ENCODE measurements at regions of chr2 and their contacts with region 1.

Region 1: GRCh38 chr2:221203125-221203524 is 369.0 kb downstream of the EPHA4 start:
- DNase-seq: peak; percentile 94
- H3K4me3 ChIP-seq: peak overlapping the region; percentile 53
- H3K27ac ChIP-seq: peak overlapping the region; percentile 88
- H3K4me1 ChIP-seq: peaks cover 60% of the 10 kb centered on the region
- CTCF ChIP-seq: no peak

Region 2: DNA sequence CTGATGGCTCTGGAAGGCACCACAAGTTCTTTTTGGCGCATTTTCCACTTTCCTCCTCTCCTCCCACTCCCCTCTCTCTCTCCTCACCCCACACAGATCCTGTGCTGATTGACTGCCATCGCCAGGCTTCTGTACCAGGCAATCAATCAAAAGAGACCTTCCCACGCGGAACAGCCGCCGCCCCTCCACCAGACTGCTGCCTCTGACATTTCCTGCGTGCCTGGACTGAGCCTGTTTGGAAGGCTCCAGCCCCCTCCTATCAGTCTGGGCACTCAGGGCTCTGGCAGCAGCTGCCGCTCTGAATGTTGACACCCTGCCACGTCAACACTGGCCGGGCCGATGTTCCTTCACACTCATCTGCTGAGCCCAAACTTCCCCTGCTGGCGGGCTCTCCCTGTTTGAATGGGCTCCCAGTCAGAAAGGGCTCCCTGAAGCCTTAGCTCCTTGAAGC is 98.7 kb before region 1 on chr2:
- CTCF ChIA-PET with region 1: no interaction called
- POLR2A ChIA-PET with region 1: no interaction called
- intact Hi-C with region 1: no loop called
- DNase-seq: no peak
- H3K4me3 ChIP-seq: no peak overlapping the region
- H3K27ac ChIP-seq: no peak overlapping the region
- H3K4me1 ChIP-seq: no peaks in the 10 kb centered on the region
- CTCF ChIP-seq: no peak

Region 3: DNA sequence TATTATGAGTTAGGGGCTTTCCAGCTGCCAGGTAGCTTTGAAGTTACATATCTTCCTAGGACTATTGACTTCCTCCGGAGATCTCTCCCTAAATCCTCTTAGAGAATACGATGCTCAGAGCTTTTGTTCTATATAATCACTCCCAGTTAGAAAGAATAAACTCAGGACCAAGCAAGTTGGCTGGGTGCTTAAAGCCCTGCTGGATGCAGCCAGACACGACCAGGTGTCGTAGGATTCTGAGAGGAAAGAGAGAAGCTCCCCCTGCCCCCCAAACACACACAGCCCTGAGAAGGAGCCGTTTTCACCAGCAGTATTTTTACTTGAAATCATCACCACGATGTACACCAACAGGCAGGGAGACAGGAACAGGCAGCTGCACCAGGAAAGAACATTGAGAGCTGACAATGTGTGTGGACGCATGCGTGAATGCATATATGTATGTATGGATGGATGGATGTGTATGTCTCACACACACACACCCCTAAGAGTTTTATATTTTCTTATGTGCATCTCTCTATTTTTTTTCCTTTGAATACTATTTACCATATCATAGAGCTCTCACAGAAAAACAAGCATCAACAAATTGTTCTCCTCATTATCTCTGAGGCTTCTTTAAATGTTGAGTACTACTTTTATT is 13.6 kb before region 1 on chr2:
- CTCF ChIA-PET with region 1: no interaction called
- POLR2A ChIA-PET with region 1: interaction called, 19 read pairs
- intact Hi-C with region 1: no loop called
- DNase-seq: no peak
- H3K4me3 ChIP-seq: no peak overlapping the region
- H3K27ac ChIP-seq: no peak overlapping the region
- H3K4me1 ChIP-seq: peaks cover 28% of the 10 kb centered on the region
- CTCF ChIP-seq: no peak

Region 4: DNA sequence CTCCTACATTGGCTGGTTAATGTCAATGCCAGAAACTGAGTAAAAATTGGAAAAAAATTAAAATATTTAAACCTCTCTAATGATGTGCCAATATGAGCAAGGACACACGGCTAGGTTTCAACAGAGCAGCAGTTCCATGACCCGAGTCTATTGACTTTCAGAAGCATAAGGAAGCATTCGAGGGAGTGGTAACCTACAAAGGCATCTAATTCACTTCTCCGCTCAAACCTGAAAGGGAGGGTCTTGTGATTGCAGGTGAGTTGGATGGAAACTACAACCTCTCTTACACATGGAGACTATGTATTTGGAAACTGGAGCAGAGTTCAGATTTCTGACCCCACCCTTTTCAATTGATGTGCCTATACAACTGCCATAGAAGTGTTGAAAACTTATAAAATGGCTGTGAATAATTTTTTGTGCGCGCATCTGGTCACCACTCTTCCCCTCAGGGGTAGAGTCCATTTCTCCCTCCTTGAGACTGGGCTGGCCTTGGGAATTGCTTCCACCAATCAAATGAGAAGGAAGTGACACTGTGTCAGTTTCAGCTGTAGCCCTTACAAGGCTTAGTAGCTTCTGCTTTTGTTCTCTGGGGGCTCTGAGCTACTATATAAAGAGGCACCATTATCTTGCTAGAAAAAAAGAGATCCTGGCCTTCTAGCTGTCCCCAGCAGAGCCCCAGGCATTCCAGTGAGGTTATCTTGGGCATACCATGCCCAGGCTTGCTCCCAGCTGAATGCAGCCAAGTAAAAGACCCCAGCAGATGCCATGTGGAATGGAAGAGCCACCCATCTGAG is 91.0 kb after region 1 on chr2:
- CTCF ChIA-PET with region 1: no interaction called
- POLR2A ChIA-PET with region 1: interaction called, 3 read pairs
- intact Hi-C with region 1: loop called (anchors 10 kb)
- DNase-seq: peak; percentile 64
- H3K4me3 ChIP-seq: no peak overlapping the region
- H3K27ac ChIP-seq: peak overlapping the region; percentile 49
- H3K4me1 ChIP-seq: peaks cover 54% of the 10 kb centered on the region
- CTCF ChIP-seq: no peak

Measured in OCI-LY7 (cell line).